ENCODE measurements at regions of chr11 and their contacts with region 1.

Region 1: GRCh38 chr11:65888163-65888814 is at the start of gene FIBP:
- DNase-seq: peak; percentile 93

Region 2: DNA sequence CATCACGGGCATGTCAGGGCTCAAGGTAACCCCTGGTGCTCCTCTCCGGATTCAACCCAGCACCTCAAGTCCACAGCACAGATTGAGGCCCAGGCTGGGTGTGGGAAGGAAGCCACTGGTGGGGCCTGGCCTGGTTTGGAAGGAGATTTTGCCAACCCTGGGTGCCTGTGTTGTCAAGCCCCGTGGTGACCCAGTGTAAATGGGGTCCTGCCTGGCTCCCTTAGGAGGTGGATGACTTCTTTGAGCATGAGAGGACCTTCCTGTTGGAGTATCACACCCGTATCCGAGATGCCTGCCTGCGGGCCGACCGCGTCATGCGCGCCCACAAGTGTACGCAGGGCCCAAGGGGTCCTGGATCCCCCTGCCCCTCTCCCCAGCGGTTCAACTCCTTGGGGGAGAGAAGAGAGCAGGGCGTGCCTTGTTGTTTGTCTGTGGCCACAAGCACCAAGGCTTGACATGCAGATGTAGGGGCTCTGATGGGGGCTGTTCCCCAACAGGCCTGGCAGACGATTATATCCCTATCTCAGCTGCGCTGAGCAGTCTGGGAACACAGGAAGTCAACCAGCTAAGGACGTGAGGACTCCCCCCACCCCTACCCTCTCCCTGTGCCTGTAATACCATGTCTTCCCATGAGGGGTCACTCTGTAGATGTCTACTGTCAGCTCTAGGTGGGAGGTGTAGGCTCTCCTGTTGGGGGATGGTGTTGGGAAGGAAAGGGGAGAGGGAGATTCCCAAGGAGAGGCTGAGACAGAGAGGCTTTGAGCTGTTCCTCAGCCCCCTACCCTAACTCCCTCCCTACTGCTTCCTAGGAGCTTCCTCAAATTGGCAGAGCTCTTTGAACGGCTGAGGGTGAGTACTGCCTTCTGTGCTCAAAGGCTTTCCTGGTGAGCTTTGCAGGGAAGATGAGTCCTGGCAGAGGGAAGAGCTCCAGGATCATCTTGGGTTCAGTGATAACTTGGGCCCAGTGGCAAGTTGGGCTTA is 37.2 kb before region 1 on chr11:
- CTCF ChIA-PET with region 1: interaction called, 3 read pairs
- POLR2A ChIA-PET with region 1: interaction called, 289 read pairs
- DNase-seq: peak; percentile 55

Region 3: DNA sequence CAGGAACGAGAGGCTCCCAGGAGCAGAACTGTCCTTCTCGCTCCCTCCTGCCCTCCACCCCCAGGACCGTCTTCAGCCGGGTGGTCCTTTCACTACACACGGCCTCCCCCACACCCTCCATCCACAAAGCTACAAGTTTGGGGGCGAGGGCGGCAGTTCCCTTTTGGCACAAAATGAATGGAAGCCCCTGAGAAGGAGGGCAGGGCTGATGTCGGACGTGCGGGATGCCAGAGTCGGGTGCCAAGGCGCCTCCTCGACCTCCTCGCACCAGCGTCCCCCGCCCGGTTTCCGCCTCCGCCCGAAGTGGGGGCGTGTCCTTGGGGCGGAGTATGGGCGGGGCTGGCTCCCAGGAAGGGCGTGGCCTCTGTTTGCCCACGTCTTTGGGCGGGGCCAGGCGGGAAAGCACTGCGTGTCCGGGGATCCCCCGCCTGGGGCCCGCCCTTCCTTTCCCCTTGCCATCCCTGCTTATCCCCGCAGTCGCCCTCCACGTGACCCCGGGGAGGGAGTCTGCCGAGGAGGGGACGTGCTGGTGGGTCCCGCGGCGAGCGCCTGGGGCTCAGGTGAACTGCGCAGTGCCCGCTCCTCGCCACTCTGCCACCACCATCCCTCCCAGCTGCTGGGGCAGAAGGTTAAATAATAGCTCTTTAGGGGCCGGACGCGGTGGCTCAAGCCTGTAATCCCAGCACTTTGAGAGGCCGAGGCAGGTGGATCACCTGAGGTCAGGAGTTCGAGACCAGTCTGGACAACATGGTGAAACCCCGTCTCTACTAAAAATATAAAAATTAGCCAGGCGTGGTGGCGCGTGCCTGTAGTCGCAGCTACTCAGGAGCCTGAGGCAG is 14.8 kb before region 1 on chr11:
- CTCF ChIA-PET with region 1: interaction called, 11 read pairs
- POLR2A ChIA-PET with region 1: interaction called, 289 read pairs
- DNase-seq: peak; percentile 95

Region 4: DNA sequence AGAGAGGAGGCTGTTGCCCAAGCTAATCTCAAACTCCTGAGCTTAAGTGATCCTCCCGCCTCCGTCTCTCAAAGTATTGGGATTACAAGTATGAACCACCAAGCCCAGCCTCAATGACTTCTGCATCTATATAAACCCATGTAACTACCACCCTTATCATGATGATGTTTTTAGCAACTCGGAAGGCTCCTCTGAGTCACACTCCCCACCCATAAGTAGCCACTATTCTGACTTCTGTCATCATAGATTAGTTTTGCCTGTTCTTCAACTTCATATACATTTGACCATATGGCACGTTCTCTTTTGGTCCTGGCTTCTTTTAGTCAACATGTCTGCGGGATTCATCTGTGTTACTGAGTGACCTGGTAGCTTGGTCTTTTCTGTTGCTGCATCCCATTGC is 18.3 kb after region 1 on chr11:
- CTCF ChIA-PET with region 1: interaction called, 36 read pairs
- POLR2A ChIA-PET with region 1: interaction called, 72 read pairs
- DNase-seq: no peak

Region 5: DNA sequence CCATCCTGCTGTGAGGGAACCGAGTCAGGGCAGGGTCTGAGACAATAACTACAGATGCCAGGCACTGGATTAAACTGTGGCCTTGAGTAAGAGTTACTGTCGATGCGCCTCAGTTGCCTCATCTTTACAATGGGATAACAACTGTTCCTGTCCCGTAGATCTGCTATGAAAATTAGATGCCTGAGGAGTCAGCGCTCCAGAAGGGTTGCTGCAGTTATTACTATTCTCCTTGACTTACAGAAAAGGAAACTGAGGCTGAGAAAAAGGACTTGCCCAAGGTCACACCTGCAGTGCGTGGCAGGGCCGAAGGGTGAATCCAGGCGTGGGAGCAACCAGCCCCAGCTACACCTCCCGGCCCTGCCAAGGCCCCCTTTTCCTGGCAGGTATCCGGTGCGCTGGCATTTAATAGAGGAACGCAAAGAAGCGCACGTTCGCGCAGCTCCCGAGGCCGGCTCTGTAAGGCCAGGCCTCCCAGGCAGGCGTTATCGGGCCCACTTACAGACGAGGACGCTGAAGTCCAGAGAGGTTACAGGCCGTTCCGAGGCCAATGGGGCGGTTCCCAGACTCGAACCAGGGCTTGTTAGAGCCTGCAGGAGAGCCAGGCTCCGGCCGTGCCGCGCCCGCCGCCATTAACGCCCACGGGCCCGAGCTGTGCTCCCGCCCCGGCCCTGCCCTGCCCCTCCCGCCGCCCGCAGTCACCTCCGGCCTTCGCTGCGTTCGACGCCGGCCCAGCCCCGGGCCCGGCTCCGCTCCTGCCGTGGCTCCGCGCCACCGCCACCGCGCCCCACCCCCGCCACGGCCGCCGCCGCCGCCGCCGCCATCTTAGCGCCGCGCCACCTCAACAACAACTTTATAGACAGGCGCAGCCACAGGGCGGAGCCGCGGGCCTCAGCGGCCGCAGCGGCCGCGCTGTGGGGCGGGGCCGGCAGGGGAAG is 30.2 kb after region 1 on chr11 and contains the start of gene C11orf68:
- CTCF ChIA-PET with region 1: interaction called, 6 read pairs
- POLR2A ChIA-PET with region 1: interaction called, 46 read pairs
- DNase-seq: peak; percentile 38

Measured in HEK293T (cell line).